ENCODE measurements at regions of chr13 and their contacts with region 1.

Region 1: GRCh38 chr13:48303359-48304142 is at the start of gene RB1:
- DNase-seq: peak; percentile 90
- ATAC-seq: peak; percentile 71
- H3K4me3 Mint-ChIP-seq: peak within 1 kb of the TSS; percentile 99
- H3K27ac Mint-ChIP-seq: peak within 1 kb of the TSS; percentile 100
- H3K4me1 Mint-ChIP-seq: peaks cover 39% of the 10 kb centered on the region
- H3K27me3 Mint-ChIP-seq: no peaks in the 10 kb centered on the region
- CTCF ChIP-seq: no peak
- total RNA-seq, gene RB1: 61.1 and 70.5 TPM in 2 replicates

Region 2: DNA sequence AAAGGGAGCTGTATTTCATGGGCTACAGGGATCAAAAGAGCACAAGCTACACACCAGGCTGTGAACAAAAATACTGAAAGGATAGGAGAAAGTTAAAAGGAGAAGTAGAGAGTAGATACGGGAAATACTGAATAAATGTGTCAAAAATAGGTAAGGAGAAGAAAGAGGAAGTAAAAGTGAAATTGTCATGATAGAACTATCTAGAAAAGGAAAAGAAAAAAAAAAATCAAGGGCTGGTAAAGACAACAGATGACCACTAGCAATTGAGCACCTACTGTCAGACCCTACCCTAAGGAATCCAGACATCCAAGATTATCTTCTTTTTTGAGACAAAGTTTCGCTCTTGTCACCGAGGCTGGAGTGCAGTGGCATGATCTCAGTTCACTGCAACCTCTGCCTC is 1921.3 kb before region 1 on chr13:
- CTCF ChIA-PET with region 1: no interaction called
- POLR2A ChIA-PET with region 1: no interaction called
- intact Hi-C with region 1: loop called (anchors 5 kb)
- DNase-seq: no peak
- ATAC-seq: peak; percentile 42
- H3K4me3 Mint-ChIP-seq: peak overlapping the region; percentile 72
- H3K27ac Mint-ChIP-seq: peak overlapping the region; percentile 93
- H3K4me1 Mint-ChIP-seq: peaks cover 75% of the 10 kb centered on the region
- H3K27me3 Mint-ChIP-seq: no peaks in the 10 kb centered on the region
- CTCF ChIP-seq: no peak

Region 3: DNA sequence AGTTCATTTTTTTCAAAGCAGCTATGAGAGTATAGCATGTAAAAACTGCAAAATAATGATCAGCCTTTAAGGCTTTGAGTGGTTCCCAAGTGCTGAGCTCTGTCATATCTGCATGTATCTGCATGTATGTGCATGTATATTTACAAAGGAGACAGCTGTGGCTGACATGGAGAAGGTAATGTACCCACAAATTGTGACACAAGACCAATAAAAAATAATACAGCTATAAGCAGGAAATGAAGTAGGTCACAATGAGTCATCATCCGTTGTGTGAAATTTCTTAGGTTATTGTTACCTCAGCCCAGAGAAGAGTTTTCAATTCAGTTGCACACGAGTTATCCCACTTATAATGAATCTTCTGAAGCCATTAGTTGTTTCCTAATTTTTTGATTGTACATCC is 147.7 kb before region 1 on chr13:
- CTCF ChIA-PET with region 1: no interaction called
- POLR2A ChIA-PET with region 1: interaction called, 6 read pairs
- intact Hi-C with region 1: loop called (anchors 2 kb)
- DNase-seq: no peak
- ATAC-seq: peak; percentile 56
- H3K4me3 Mint-ChIP-seq: peak overlapping the region; percentile 32
- H3K27ac Mint-ChIP-seq: no peak overlapping the region
- H3K4me1 Mint-ChIP-seq: peaks cover 46% of the 10 kb centered on the region
- H3K27me3 Mint-ChIP-seq: no peaks in the 10 kb centered on the region
- CTCF ChIP-seq: no peak

Region 4: GRCh38 chr13:48291730-48292129 is 11.8 kb before region 1 on chr13:
- CTCF ChIA-PET with region 1: no interaction called
- POLR2A ChIA-PET with region 1: interaction called, 17 read pairs
- intact Hi-C with region 1: loop called (anchors 1 kb)
- DNase-seq: no peak
- ATAC-seq: no peak
- H3K4me3 Mint-ChIP-seq: no peak overlapping the region
- H3K27ac Mint-ChIP-seq: no peak overlapping the region
- H3K4me1 Mint-ChIP-seq: peaks cover 17% of the 10 kb centered on the region
- H3K27me3 Mint-ChIP-seq: no peaks in the 10 kb centered on the region
- CTCF ChIP-seq: no peak

Region 5: DNA sequence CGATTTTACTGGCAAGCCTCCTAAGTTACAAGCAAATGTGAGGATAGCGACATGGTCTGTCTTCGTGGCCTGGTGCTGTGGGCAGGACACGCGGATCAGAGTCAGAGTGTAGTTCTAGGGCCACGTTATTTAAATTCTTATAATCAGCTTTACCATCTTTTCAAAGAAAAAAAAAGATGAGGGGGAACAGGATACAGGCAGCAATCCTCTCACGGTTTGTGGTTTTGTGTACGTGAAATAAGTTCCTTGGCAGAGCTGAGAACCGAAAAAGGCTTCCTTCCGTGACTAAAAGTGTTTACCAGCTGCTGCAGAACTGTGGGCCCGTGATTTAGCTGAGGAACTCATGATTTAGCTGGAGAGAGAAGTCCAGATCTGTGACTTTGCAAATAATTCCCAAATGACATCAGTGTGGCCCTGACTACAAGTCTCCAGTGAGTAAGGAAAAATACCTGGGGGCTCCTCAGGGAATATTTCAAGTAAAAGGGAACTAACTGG is 202.1 kb after region 1 on chr13:
- CTCF ChIA-PET with region 1: no interaction called
- POLR2A ChIA-PET with region 1: no interaction called
- intact Hi-C with region 1: loop called (anchors 1 kb)
- DNase-seq: no peak
- ATAC-seq: peak; percentile 85
- H3K4me3 Mint-ChIP-seq: peak overlapping the region; percentile 75
- H3K27ac Mint-ChIP-seq: peak overlapping the region; percentile 59
- H3K4me1 Mint-ChIP-seq: peaks cover 55% of the 10 kb centered on the region
- H3K27me3 Mint-ChIP-seq: peaks cover 20% of the 10 kb centered on the region
- CTCF ChIP-seq: no peak

Region 6: GRCh38 chr13:48975856-48976575 is 672.5 kb after region 1 on chr13 and contains the start of gene FNDC3A:
- CTCF ChIA-PET with region 1: no interaction called
- POLR2A ChIA-PET with region 1: interaction called, 3 read pairs
- intact Hi-C with region 1: loop called (anchors 1 kb)
- DNase-seq: peak; percentile 82
- ATAC-seq: peak; percentile 77
- H3K4me3 Mint-ChIP-seq: peak within 1 kb of the TSS; percentile 95
- H3K27ac Mint-ChIP-seq: peak within 1 kb of the TSS; percentile 98
- H3K4me1 Mint-ChIP-seq: peaks cover 47% of the 10 kb centered on the region
- H3K27me3 Mint-ChIP-seq: no peaks in the 10 kb centered on the region
- CTCF ChIP-seq: no peak
- total RNA-seq, gene FNDC3A: 30.3 and 34.1 TPM in 2 replicates